Activated B cell treated with CpG ODN at 0.5 μM for 24 hours (primary cell): ENCODE measurements at regions of chr1 and their contacts with region 1.

Region 1: DNA sequence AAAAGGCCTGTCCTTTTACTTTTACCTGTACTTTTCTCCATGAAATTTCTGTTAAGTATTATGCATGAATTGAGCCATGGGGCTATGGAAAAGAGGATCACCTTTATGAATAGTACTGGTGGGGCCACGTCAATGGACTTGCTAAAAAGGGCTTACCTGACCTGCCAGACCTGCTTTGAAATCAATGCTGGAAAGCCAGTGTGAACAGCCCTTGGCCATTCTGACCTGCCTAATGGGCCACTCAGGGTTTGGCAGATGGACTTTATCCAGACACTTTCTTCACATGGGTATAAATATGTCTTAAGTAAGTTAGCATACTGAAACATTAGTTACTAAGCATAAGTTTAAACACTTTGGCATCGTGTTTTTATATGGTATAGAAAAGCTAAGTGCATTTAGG is 8.3 kb upstream of the GUK1 start:
- DNase-seq: no peak
- ATAC-seq: no peak
- H3K4me3 Mint-ChIP-seq: no peak overlapping the region
- H3K27ac Mint-ChIP-seq: no peak overlapping the region
- H3K4me1 Mint-ChIP-seq: peaks cover 9% of the 10 kb centered on the region
- H3K27me3 Mint-ChIP-seq: peaks cover 2% of the 10 kb centered on the region
- CTCF ChIP-seq: no peak

Region 2: DNA sequence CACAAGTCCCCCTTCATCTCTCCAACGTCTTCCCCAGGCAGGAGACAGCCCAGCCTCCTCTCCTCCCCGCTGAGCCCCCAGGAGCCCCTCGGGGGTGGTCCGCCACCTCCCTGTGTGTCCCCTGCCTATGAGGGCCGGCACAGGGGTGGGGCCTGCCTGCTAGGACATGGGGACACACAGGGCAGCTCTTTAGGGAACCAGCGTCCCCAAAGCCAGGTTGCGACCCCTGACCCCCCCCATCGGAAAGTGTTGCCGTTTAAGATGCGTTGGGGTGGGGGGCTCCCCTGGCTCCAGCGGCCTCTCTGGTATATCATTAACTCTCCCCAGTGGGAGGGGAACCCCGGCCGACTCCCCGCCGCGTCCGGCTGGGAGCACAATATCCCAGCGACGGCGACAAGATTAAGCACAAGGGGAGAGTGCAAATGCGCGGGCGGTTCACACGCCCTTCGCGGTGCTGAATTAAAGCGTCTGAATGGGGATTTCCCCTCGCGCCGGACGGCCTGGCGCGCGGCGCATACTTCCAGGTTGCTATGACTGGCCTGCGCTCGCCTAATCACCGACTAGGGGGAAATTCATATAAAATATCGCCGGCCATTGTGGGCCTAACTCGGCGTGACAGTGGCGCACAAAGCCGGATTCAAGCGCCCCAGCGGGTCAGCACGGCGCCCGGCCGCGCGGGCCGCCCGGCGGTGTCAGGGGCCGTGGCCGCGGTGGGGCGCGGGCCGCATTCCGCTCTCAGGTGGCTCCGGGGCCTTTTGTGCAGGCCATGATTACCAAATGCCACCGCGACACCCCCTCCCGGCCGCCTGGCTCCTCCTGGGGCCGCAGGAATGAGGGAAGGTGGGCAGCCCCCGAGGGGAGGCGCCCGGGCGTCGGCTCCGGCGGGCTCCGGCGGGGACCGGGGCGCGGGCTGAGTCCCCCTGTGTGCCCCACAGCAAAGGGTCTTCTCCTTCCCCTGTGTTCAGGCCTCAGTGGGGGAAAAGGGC is 94.1 kb before region 1 on chr1:
- CTCF ChIA-PET with region 1: no interaction called
- POLR2A ChIA-PET with region 1: no interaction called
- intact Hi-C with region 1: no loop called
- DNase-seq: no peak
- ATAC-seq: peak; percentile 87
- H3K4me3 Mint-ChIP-seq: no peak overlapping the region
- H3K27ac Mint-ChIP-seq: no peak overlapping the region
- H3K4me1 Mint-ChIP-seq: peaks cover 2% of the 10 kb centered on the region
- H3K27me3 Mint-ChIP-seq: peaks cover 41% of the 10 kb centered on the region
- CTCF ChIP-seq: no peak

Region 3: DNA sequence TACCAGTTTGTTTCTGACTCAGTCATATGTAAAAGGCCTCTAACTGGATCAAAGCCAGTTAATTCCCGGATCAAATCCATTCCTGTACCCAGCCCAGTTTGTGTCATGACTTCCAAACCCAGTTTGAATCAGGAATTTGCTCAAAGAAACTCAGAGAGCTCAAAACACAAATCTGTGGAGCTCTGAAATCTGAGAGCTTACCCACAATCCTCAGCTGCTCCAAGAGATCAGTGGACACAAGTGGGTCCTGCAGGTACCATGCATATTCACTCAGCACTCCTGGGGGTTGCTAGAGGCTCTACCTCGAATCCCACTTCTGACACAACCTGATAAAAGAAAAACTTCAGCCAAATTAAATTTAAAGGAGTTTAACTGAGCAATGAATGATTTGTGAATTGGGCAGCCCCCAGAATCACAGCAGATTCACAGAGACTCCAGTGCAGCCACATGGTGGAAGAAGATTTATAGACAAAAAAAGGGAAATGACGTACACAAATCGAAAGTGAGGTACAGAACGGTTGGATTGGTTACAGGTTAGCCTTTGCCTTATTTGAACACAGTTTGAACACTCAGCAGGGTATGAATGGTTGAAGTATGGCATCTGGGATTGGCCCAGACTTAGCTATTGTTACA is 10.8 kb before region 1 on chr1:
- CTCF ChIA-PET with region 1: interaction called, 10 read pairs
- POLR2A ChIA-PET with region 1: no interaction called
- intact Hi-C with region 1: no loop called
- DNase-seq: no peak
- ATAC-seq: peak; percentile 57
- H3K4me3 Mint-ChIP-seq: peak overlapping the region; percentile 38
- H3K27ac Mint-ChIP-seq: no peak overlapping the region
- H3K4me1 Mint-ChIP-seq: peaks cover 9% of the 10 kb centered on the region
- H3K27me3 Mint-ChIP-seq: no peaks in the 10 kb centered on the region
- CTCF ChIP-seq: no peak

Region 4: DNA sequence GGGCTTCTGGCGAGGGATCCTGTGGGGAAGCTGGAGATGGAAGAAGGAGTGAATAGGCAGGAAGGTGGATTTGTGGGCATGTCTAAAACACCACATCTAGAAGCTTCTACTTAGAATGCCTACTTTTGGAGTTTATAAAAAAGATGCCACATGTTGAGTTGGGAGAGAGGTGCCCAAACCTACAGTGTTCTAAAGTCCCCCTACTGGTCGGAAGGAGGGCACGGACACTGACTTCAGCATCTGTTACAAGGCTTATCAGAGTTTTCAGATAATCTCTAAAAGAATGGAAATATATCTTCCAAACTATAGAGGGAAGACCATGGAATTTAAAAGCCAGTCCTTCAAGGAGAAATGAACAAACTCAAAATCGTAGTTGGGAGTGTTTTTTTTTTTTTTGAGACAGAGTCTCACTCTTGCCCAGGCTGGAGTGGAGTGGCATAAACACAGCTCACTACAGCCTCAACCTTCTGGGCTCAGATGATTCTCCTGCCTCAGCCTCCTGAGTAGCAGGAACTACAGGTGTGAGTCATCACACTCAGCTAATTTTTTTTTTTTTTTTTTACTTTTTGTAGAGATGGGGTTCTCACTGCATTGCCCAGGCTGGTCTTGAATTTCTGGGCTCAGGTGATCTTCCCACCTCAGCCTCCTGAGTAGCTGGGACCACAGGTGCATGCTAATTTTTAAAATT is 48.6 kb after region 1 on chr1:
- CTCF ChIA-PET with region 1: no interaction called
- POLR2A ChIA-PET with region 1: interaction called, 3 read pairs
- intact Hi-C with region 1: loop called (anchors 2 kb)
- DNase-seq: no peak
- ATAC-seq: peak; percentile 40
- H3K4me3 Mint-ChIP-seq: no peak overlapping the region
- H3K27ac Mint-ChIP-seq: no peak overlapping the region
- H3K4me1 Mint-ChIP-seq: peaks cover 3% of the 10 kb centered on the region
- H3K27me3 Mint-ChIP-seq: no peaks in the 10 kb centered on the region
- CTCF ChIP-seq: no peak

Region 5: GRCh38 chr1:228275739-228276421 is 144.1 kb after region 1 on chr1:
- CTCF ChIA-PET with region 1: no interaction called
- POLR2A ChIA-PET with region 1: no interaction called
- intact Hi-C with region 1: loop called (anchors 5 kb)
- DNase-seq: peak; percentile 66
- ATAC-seq: peak; percentile 98
- H3K4me3 Mint-ChIP-seq: peak overlapping the region; percentile 82
- H3K27ac Mint-ChIP-seq: no peak overlapping the region
- H3K4me1 Mint-ChIP-seq: peaks cover 8% of the 10 kb centered on the region
- H3K27me3 Mint-ChIP-seq: no peaks in the 10 kb centered on the region
- CTCF ChIP-seq: no peak

Region 6: GRCh38 chr1:228457396-228458176 is 325.8 kb after region 1 on chr1:
- CTCF ChIA-PET with region 1: no interaction called
- POLR2A ChIA-PET with region 1: no interaction called
- intact Hi-C with region 1: loop called (anchors 2 kb)
- DNase-seq: peak; percentile 53
- ATAC-seq: peak; percentile 85
- H3K4me3 Mint-ChIP-seq: peak overlapping the region; percentile 89
- H3K27ac Mint-ChIP-seq: peak overlapping the region; percentile 89
- H3K4me1 Mint-ChIP-seq: peaks cover 25% of the 10 kb centered on the region
- H3K27me3 Mint-ChIP-seq: peaks cover 26% of the 10 kb centered on the region
- CTCF ChIP-seq: no peak

Region 7: GRCh38 chr1:228500901-228501871 is 369.4 kb after region 1 on chr1:
- CTCF ChIA-PET with region 1: no interaction called
- POLR2A ChIA-PET with region 1: no interaction called
- intact Hi-C with region 1: loop called (anchors 5 kb)
- DNase-seq: peak; percentile 72
- ATAC-seq: peak; percentile 96
- H3K4me3 Mint-ChIP-seq: peak overlapping the region; percentile 77
- H3K27ac Mint-ChIP-seq: peak overlapping the region; percentile 84
- H3K4me1 Mint-ChIP-seq: peaks cover 17% of the 10 kb centered on the region
- H3K27me3 Mint-ChIP-seq: peaks cover 9% of the 10 kb centered on the region
- CTCF ChIP-seq: peak; percentile 91

Region 8: DNA sequence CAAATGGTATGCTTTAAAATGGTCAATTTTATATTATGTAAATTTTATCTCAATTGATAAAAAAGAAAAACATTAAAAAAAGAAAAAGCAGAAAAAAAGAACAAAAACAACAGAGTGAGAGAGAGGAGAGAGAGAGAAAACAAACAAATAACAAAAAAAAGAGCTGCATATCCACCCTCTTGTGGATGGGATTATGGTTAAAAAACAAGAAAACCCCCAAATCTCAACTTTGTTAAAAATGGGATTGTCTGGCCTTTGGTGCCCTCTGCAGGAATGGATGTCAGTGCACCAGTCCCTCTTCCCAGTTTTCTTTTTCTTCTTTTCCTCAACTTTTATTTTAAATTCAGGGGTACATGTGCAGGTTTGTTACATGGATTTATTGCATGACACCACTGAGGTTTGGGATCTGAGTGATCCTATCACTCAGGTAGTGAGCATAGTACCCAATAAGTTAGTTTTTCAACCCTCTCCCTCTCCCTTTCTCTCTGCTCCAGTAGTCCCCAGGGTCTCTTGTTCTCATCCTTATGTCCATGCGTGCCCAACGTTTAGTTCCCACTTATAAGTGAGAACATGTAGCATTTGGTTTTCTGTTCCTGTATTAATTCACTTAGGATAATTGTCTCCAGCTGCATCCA is 383.6 kb after region 1 on chr1:
- CTCF ChIA-PET with region 1: interaction called, 18 read pairs
- POLR2A ChIA-PET with region 1: no interaction called
- intact Hi-C with region 1: loop called (anchors 1 kb)
- DNase-seq: no peak
- ATAC-seq: peak; percentile 45
- H3K4me3 Mint-ChIP-seq: no peak overlapping the region
- H3K27ac Mint-ChIP-seq: no peak overlapping the region
- H3K4me1 Mint-ChIP-seq: no peaks in the 10 kb centered on the region
- H3K27me3 Mint-ChIP-seq: peaks cover 18% of the 10 kb centered on the region
- CTCF ChIP-seq: no peak